ENCODE measurements at regions of chr3 and their contacts with region 1.

Region 1: GRCh38 chr3:184417619-184418327 is 37.9 kb downstream of the CHRD start:
- DNase-seq: peak; percentile 57 to 75
- H3K4me3 ChIP-seq: no peak overlapping the region
- H3K27ac ChIP-seq: no peak overlapping the region
- H3K4me1 ChIP-seq: no peaks in the 10 kb centered on the region
- H3K27me3 ChIP-seq: peaks cover 11% of the 10 kb centered on the region; the same call in 1 of the 2 replicates
- CTCF ChIP-seq: peak; percentile 98

Region 2: GRCh38 chr3:184345317-184346144 is 72.2 kb before region 1 on chr3:
- CTCF ChIA-PET with region 1: no interaction called
- POLR2A ChIA-PET with region 1: no interaction called
- intact Hi-C with region 1: no loop called
- DNase-seq: peak; percentile 83
- H3K4me3 ChIP-seq: no peak overlapping the region
- H3K27ac ChIP-seq: no peak overlapping the region
- H3K4me1 ChIP-seq: peaks cover 8% of the 10 kb centered on the region; the same call in 1 of the 2 replicates
- H3K27me3 ChIP-seq: no peaks in the 10 kb centered on the region
- CTCF ChIP-seq: peak; percentile 86

Region 3: GRCh38 chr3:184371570-184372018 is 46.2 kb before region 1 on chr3:
- CTCF ChIA-PET with region 1: interaction called, 5 read pairs
- POLR2A ChIA-PET with region 1: no interaction called
- intact Hi-C with region 1: loop called (anchors 1 kb)
- DNase-seq: peak; percentile 84 to 89
- H3K4me3 ChIP-seq: no peak overlapping the region
- H3K27ac ChIP-seq: no peak overlapping the region
- H3K4me1 ChIP-seq: no peaks in the 10 kb centered on the region
- H3K27me3 ChIP-seq: peaks cover 35% of the 10 kb centered on the region
- CTCF ChIP-seq: peak; percentile 99

Region 4: GRCh38 chr3:184443380-184443779 is 25.6 kb after region 1 on chr3:
- CTCF ChIA-PET with region 1: interaction called, 11 read pairs
- POLR2A ChIA-PET with region 1: no interaction called
- intact Hi-C with region 1: no loop called
- DNase-seq: peak; percentile 65 to 87
- H3K4me3 ChIP-seq: no peak overlapping the region
- H3K27ac ChIP-seq: peak overlapping the region; percentile 55
- H3K4me1 ChIP-seq: peaks cover 63% of the 10 kb centered on the region
- H3K27me3 ChIP-seq: no peaks in the 10 kb centered on the region
- CTCF ChIP-seq: no peak

Region 5: DNA sequence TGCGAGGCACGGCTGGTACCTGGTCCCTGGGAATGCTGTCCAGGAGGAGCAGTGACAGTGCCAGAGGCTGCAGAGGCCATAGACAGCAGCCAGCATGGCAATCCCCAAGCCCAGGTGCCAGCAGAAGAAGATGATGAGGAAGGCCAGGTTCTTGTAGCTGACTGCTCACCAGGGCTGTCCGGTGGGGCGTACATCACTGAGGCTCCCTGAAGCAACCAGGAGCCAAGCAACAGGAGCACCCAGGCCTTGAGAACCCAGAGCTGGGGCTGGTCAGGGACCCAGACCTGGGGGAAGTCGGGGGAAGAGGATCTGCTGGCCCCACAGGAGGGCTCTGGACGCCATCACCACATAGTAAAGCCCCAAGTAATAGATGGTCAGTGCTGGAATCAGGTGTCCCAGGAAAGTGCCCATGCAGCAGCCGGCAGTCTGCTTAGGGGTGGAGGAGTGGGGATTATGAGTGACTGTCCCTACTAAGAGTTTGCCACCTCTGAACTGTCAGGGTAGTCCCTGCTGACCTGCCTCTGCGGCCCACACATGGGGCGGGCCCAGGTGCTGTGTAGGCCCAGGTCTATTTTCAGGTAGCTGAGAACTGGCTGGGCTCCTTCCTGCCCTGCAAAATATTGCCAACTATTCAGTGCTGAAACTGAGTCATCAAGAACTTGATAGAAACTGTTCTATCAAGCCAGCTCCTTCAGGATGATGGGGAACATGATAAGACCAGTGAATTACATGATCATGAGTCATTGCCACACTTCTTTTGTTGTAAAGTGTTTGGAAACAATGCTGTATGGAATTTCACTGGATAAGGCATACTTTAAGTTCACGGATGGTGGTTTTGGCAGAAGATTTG is 30.8 kb after region 1 on chr3:
- CTCF ChIA-PET with region 1: interaction called, 11 read pairs
- POLR2A ChIA-PET with region 1: no interaction called
- intact Hi-C with region 1: no loop called
- DNase-seq: peak; percentile 90 to 100
- H3K4me3 ChIP-seq: no peak overlapping the region
- H3K27ac ChIP-seq: peak overlapping the region; percentile 79
- H3K4me1 ChIP-seq: peaks cover 43% of the 10 kb centered on the region
- H3K27me3 ChIP-seq: no peaks in the 10 kb centered on the region
- CTCF ChIP-seq: no peak

Region 6: GRCh38 chr3:184469423-184469822 is 51.6 kb after region 1 on chr3:
- CTCF ChIA-PET with region 1: interaction called, 5 read pairs
- POLR2A ChIA-PET with region 1: no interaction called
- intact Hi-C with region 1: loop called (anchors 1 kb)
- DNase-seq: peak in 1 of 2 experiments; percentile 56
- H3K4me3 ChIP-seq: no peak overlapping the region
- H3K27ac ChIP-seq: no peak overlapping the region
- H3K4me1 ChIP-seq: no peaks in the 10 kb centered on the region
- H3K27me3 ChIP-seq: peaks cover 35% of the 10 kb centered on the region
- CTCF ChIP-seq: peak; percentile 90

Region 7: GRCh38 chr3:184513276-184514170 is 95.8 kb after region 1 on chr3:
- CTCF ChIA-PET with region 1: interaction called, 7 read pairs
- POLR2A ChIA-PET with region 1: no interaction called
- intact Hi-C with region 1: loop called (anchors 1 kb)
- DNase-seq: peak; percentile 56 to 85
- H3K4me3 ChIP-seq: no peak overlapping the region
- H3K27ac ChIP-seq: no peak overlapping the region
- H3K4me1 ChIP-seq: no peaks in the 10 kb centered on the region
- H3K27me3 ChIP-seq: peaks cover 93% of the 10 kb centered on the region
- CTCF ChIP-seq: peak; percentile 94